Activated CD4-positive, alpha-beta memory T cell treated with anti-CD3 and anti-CD28 coated beads, Interleukin-2, amount 10 ng/mL, durations not matched to agents 7 days and 5 days (primary cell): ENCODE measurements at regions of chr19 and their contacts with region 1.

Region 1: DNA sequence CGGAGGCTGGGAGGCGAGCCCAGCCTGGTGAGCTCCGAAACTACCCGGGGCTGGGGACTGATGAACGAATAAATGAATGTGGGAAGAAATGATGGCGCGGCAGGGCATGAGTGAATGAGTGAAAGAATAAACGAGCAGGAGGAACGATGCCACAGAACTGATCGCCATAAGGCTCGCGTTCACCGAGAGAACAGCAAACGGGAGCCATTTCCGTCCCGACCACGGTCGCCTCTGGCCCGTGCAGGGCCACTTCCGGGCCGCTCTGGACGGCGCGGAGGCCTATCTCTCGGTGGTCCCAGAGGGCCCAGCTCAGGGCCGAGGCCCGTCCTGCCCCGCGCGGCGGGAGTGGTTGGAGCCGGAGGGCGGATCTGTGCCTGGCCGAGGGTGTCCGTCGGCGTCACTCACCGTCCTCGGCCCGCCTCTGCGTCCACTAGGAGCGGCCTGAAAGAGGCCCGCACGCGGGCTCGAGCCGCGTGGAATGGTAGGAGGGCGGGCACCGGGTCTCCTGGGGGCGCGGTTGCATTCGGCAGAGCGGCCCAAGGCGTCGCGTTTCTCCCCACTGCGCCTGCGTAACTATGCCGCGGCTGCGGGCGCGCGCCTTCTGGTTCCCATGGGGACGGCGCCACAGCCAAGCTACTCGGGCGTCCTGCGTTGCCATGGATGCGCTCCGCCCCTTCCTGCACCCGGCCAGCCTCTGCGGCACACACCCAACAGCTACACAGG is at the start of gene ZNF497:
- DNase-seq: peak; percentile 97
- H3K4me3 Mint-ChIP-seq: peak within 1 kb of the TSS; percentile 89
- H3K27ac Mint-ChIP-seq: peak within 1 kb of the TSS; percentile 77
- H3K4me1 Mint-ChIP-seq: peaks cover 15% of the 10 kb centered on the region
- H3K27me3 Mint-ChIP-seq: no peaks in the 10 kb centered on the region
- total RNA-seq, gene ZNF497: 1.1 to 1.2 TPM

Region 2: GRCh38 chr19:58326914-58327726 is 35.3 kb before region 1 on chr19 and contains the start of gene ZSCAN22:
- CTCF ChIA-PET with region 1: interaction called, 6 read pairs
- POLR2A ChIA-PET with region 1: interaction called, 11 read pairs
- DNase-seq: peak; percentile 93
- H3K4me3 Mint-ChIP-seq: no peak within 1 kb of the TSS
- H3K27ac Mint-ChIP-seq: no peak within 1 kb of the TSS
- H3K4me1 Mint-ChIP-seq: no peaks in the 10 kb centered on the region
- H3K27me3 Mint-ChIP-seq: no peaks in the 10 kb centered on the region
- total RNA-seq, gene ZSCAN22: 5.4 to 5.7 TPM

Region 3: DNA sequence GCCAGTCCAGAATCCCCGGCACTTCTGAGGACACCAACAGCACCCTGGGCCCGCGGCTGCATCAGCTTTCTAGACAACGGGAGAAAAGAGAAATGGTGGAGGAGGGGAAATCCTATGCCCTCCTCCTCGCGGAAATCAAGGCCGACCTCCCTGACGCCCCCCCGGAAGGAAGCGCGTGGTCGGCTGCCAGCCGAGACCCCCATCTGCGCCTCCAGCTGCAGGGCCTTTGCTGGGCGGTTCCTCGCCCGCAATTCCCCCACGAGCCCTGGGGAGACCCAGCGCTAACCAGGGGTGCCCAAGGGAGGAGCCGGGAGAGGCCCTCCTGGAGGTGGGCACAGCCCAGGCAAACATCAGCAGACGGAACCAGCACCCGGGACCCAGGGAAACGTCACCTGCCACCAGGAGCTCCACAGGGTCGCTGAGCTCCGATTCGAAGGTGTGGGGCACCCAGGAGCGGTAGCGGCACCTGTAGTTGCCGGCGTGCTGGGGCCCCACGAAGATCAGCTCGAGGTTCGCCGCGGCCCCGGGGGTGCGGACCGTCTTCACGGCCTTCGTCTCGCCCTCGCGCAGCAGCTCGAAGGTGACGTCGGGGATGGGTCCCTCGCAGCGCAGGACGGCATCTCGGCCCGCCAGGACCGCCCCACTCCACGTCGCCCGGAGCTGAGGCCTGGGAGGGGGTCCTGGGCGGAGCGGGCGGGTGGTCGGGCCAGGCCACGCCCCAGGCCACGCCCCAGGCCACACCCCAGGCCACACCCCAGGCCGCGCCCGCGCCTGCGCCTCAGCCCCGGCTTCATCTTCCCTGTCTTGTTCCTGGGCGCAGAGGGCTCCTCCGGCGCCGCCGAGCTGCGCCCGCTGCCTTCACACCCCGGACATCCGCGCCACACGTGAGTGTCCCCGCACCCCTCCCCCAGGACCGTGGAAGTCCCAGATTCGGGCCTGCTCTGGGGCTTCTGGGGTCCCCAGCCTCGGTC is 15.2 kb before region 1 on chr19:
- CTCF ChIA-PET with region 1: interaction called, 15 read pairs
- POLR2A ChIA-PET with region 1: interaction called, 22 read pairs
- DNase-seq: peak; percentile 75
- H3K4me3 Mint-ChIP-seq: peak overlapping the region; percentile 92
- H3K27ac Mint-ChIP-seq: peak overlapping the region; percentile 68
- H3K4me1 Mint-ChIP-seq: peaks cover 35% of the 10 kb centered on the region
- H3K27me3 Mint-ChIP-seq: peaks cover 6% of the 10 kb centered on the region

Region 4: GRCh38 chr19:58386576-58387337 is 24.3 kb after region 1 on chr19 and contains the start of gene RPS5:
- CTCF ChIA-PET with region 1: interaction called, 3 read pairs
- POLR2A ChIA-PET with region 1: interaction called, 15 read pairs
- DNase-seq: peak; percentile 96
- H3K4me3 Mint-ChIP-seq: peak within 1 kb of the TSS; percentile 95
- H3K27ac Mint-ChIP-seq: peak within 1 kb of the TSS; percentile 96
- H3K4me1 Mint-ChIP-seq: peaks cover 46% of the 10 kb centered on the region
- H3K27me3 Mint-ChIP-seq: no peaks in the 10 kb centered on the region
- total RNA-seq, gene RPS5: 785 to 801 TPM

Region 5: DNA sequence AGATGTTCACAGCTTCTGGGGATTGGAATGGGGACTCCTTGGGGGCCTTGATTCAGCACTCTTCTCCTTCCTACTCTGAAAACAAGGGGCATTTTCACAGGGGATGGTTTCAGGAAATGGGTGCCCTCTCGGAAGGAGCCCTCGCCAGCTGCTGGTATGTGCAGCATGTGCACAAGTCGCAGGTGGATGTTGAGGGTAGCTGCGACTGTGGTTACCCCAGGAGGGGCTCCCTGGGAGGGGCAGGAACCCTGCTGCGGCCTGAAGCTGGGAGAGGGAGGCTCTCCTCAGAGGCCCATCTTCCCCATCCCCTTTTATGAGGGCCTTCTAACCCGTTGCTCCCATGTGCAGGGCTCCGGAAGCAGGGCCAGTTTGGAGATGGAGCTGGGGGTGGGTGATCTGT is 119.9 kb after region 1 on chr19:
- CTCF ChIA-PET with region 1: no interaction called
- POLR2A ChIA-PET with region 1: no interaction called
- DNase-seq: no peak
- H3K4me3 Mint-ChIP-seq: no peak overlapping the region
- H3K27ac Mint-ChIP-seq: no peak overlapping the region
- H3K4me1 Mint-ChIP-seq: peaks cover 5% of the 10 kb centered on the region
- H3K27me3 Mint-ChIP-seq: no peaks in the 10 kb centered on the region